Activated CD8-positive, alpha-beta T cell treated with anti-CD3 and anti-CD28 coated beads for 36 hours (primary cell): ENCODE measurements at regions of chr1 and their contacts with region 1.

Region 1: GRCh38 chr1:116485071-116485735 is 85.6 kb downstream of the CD58 start:
- DNase-seq: peak; percentile 95
- ATAC-seq: peak; percentile 96
- H3K4me3 Mint-ChIP-seq: no peak overlapping the region
- H3K27ac Mint-ChIP-seq: no peak overlapping the region
- H3K4me1 Mint-ChIP-seq: peaks cover 4% of the 10 kb centered on the region
- H3K27me3 Mint-ChIP-seq: no peaks in the 10 kb centered on the region
- CTCF ChIP-seq: peak; percentile 94

Region 2: GRCh38 chr1:116151739-116152576 is 333.2 kb before region 1 on chr1:
- CTCF ChIA-PET with region 1: interaction called, 460 read pairs
- POLR2A ChIA-PET with region 1: interaction called, 3 read pairs
- intact Hi-C with region 1: loop called (anchors 5 kb)
- DNase-seq: peak; percentile 85
- ATAC-seq: peak; percentile 97
- H3K4me3 Mint-ChIP-seq: peak overlapping the region; percentile 62
- H3K27ac Mint-ChIP-seq: peak overlapping the region; percentile 65
- H3K4me1 Mint-ChIP-seq: peaks cover 22% of the 10 kb centered on the region
- H3K27me3 Mint-ChIP-seq: no peaks in the 10 kb centered on the region
- CTCF ChIP-seq: peak; percentile 91

Region 3: GRCh38 chr1:116360429-116361173 is 124.6 kb before region 1 on chr1:
- CTCF ChIA-PET with region 1: interaction called, 27 read pairs
- POLR2A ChIA-PET with region 1: no interaction called
- intact Hi-C with region 1: loop called (anchors 5 kb)
- DNase-seq: no peak
- ATAC-seq: no peak
- H3K4me3 Mint-ChIP-seq: no peak overlapping the region
- H3K27ac Mint-ChIP-seq: no peak overlapping the region
- H3K4me1 Mint-ChIP-seq: peaks cover 9% of the 10 kb centered on the region
- H3K27me3 Mint-ChIP-seq: no peaks in the 10 kb centered on the region
- CTCF ChIP-seq: peak; percentile 50

Region 4: GRCh38 chr1:116401646-116402176 is 83.5 kb before region 1 on chr1:
- CTCF ChIA-PET with region 1: interaction called, 10 read pairs
- POLR2A ChIA-PET with region 1: no interaction called
- intact Hi-C with region 1: no loop called
- DNase-seq: no peak
- ATAC-seq: no peak
- H3K4me3 Mint-ChIP-seq: no peak overlapping the region
- H3K27ac Mint-ChIP-seq: peak overlapping the region; percentile 84
- H3K4me1 Mint-ChIP-seq: peaks cover 20% of the 10 kb centered on the region
- H3K27me3 Mint-ChIP-seq: no peaks in the 10 kb centered on the region
- CTCF ChIP-seq: no peak

Region 5: GRCh38 chr1:116460261-116460660 is 24.9 kb before region 1 on chr1:
- CTCF ChIA-PET with region 1: interaction called, 29 read pairs
- POLR2A ChIA-PET with region 1: no interaction called
- intact Hi-C with region 1: no loop called
- DNase-seq: no peak
- ATAC-seq: no peak
- H3K4me3 Mint-ChIP-seq: no peak overlapping the region
- H3K27ac Mint-ChIP-seq: no peak overlapping the region
- H3K4me1 Mint-ChIP-seq: no peaks in the 10 kb centered on the region
- H3K27me3 Mint-ChIP-seq: no peaks in the 10 kb centered on the region
- CTCF ChIP-seq: no peak